ENCODE measurements at regions of chr1 and their contacts with region 1.

Region 1: DNA sequence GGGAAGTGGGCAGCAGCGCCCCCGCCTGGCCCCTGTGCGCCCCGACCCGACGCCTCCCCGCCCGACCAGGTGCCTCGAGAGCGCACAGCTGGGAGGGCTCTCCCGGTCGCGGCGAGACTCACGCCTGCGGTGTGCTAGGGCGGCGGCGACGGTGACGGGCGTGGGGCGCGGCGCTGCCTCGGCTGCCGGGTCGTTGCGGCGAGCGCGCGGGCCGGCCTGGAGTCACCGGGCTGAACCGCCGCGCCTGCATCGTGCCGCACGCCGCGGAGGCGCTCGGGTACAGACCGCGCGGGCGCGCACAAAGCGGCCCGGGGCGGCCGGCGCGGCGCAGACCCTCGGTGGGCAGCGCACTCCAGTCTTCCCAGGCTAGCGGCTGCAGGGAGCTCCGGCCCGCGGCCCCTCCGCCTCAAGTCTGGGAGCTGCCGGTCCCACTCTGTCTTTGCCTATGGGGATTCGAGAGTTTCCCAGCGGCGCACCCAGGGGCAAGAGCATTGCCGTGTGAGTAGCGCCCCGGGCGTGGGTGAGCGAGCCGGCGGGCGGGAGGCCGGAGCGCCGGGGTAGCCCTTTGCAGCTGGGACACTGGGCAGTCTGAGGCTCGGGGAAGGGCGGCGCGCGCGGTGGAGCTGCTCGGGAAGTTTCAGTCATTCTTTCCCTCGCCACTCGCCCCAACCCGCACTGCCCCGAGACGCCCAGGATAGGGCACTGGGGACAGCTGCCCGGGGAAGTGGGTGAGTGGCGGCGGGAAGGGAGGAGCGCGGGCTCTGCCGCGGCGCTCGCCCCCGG is at the start of gene SLC35F3:
- DNase-seq: peak; percentile 77
- total RNA-seq, gene SLC35F3: not detected

Region 2: DNA sequence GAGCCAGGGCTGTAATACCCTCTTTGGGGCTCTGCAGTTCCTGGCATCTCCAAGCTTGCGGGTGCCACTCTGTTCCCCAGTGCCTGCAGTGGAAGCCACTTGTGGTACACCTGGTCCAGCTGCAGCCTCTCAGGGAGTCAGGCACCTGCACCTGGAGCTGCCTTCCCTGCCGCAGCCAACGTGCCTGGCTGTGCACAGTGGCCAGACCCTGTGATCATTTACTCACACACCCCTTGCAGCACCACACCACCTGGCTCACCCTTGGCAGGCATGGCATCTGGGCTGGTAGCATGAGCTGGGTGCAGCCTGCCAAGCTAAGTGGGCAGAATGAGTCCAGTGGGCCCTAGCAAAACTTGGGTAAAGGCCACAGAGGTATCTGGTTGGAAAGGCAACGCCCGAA is 1005.6 kb before region 1 on chr1:
- intact Hi-C with region 1: loop called in 1 of 2 experiments (anchors 5 kb)
- DNase-seq: no peak

Region 3: GRCh38 chr1:233885196-233886028 is 19.4 kb before region 1 on chr1:
- intact Hi-C with region 1: no loop called
- DNase-seq: no peak